Panc1 (cell line): ENCODE measurements at regions of chr7 and their contacts with region 1.

Region 1: GRCh38 chr7:67788669-67789068 is 792.0 kb downstream of the TYW1 start:
- DNase-seq: no peak
- ATAC-seq: no peak
- H3K4me3 ChIP-seq: no peak overlapping the region
- H3K27ac ChIP-seq: no peak overlapping the region
- H3K4me1 ChIP-seq: no peaks in the 10 kb centered on the region
- H3K27me3 ChIP-seq: no peaks in the 10 kb centered on the region; the same call in 1 of the 2 replicates
- CTCF ChIP-seq: peak; percentile 65

Region 2: GRCh38 chr7:67863907-67864306 is 75.2 kb after region 1 on chr7:
- CTCF ChIA-PET with region 1: no interaction called
- POLR2A ChIA-PET with region 1: no interaction called
- in situ Hi-C with region 1: no loop called
- intact Hi-C with region 1: no loop called
- DNase-seq: no peak
- ATAC-seq: no peak
- H3K4me3 ChIP-seq: no peak overlapping the region
- H3K27ac ChIP-seq: no peak overlapping the region
- H3K4me1 ChIP-seq: no peaks in the 10 kb centered on the region
- H3K27me3 ChIP-seq: no peaks in the 10 kb centered on the region
- CTCF ChIP-seq: no peak

Region 3: GRCh38 chr7:67901808-67902480 is 113.3 kb after region 1 on chr7:
- CTCF ChIA-PET with region 1: no interaction called
- POLR2A ChIA-PET with region 1: no interaction called
- in situ Hi-C with region 1: no loop called
- intact Hi-C with region 1: no loop called
- DNase-seq: no peak
- ATAC-seq: no peak
- H3K4me3 ChIP-seq: peak overlapping the region in 1 of 2 experiments; percentile 14; a peak in 1 of 4 replicates
- H3K27ac ChIP-seq: no peak overlapping the region
- H3K4me1 ChIP-seq: no peaks in the 10 kb centered on the region
- H3K27me3 ChIP-seq: no peaks in the 10 kb centered on the region
- CTCF ChIP-seq: no peak

Region 4: DNA sequence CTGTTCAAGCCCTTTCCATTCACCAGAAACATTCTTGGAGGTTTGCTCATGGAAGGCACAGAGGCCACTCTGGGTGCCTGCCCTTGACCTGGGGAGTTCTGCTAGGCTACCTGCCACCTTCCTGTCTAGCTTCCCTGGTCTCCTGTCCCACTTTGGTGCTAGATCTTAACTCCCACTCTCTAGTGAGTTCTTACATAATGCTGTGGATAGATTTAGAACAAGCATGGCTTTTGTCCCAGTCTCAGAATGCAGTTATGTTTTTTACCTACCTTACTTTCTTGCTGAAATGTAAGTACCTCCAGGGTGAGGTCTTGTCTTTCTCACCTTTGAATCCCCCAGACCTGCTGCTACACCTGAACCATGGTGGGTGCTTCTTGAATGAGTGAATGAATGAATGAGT is 460.3 kb after region 1 on chr7:
- CTCF ChIA-PET with region 1: interaction called, 17 read pairs
- POLR2A ChIA-PET with region 1: no interaction called
- in situ Hi-C with region 1: no loop called
- intact Hi-C with region 1: no loop called
- DNase-seq: no peak
- ATAC-seq: no peak
- H3K4me3 ChIP-seq: no peak overlapping the region
- H3K27ac ChIP-seq: no peak overlapping the region
- H3K4me1 ChIP-seq: no peaks in the 10 kb centered on the region
- H3K27me3 ChIP-seq: no peaks in the 10 kb centered on the region
- CTCF ChIP-seq: no peak